Cardiac septum (tissue), 1 donor: ENCODE measurements at regions of chr12 and their contacts with region 1.

Region 1: GRCh38 chr12:110893956-110894355 is 26.4 kb downstream of the MYL2 start:
- DNase-seq: no peak

Region 2: GRCh38 chr12:110126557-110126956 is 767.4 kb before region 1 on chr12:
- intact Hi-C with region 1: no loop called
- DNase-seq: no peak

Region 3: DNA sequence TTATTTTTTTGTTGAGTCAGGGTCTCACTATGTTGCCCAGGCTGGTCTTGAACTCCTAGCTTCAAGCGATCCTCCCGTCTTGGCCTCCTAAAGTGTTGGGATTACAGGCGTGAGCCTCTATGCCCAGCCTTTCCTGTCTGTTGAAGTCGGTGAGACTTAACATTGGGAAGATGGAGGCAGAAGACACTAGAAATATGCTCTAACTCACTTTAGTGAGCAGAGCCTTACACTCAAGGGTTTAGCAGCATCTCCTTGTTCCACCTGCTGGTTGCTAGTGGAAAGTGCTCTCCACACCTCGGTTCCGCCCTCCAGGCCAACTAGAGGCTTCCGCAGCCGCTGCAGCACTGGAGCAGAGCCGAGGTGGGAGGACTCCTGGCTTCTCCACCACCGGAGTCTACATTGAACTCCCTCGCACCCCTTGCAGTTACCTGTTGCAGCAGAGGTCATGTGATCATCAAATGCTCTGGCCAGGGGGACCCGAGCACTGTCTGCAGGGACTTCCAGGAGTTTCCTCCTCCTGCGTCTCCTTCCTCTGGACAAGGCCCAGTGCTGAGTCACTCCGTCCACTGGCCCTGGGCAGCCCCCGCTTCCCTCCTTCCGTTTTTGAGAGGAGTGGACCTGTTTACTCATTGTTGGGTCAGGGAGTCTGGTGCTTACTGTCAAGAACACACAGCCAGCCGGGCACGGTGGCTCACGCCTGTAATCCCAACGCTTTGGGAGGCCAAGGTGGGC is 195.6 kb before region 1 on chr12:
- intact Hi-C with region 1: no loop called
- DNase-seq: peak; percentile 92

Region 4: DNA sequence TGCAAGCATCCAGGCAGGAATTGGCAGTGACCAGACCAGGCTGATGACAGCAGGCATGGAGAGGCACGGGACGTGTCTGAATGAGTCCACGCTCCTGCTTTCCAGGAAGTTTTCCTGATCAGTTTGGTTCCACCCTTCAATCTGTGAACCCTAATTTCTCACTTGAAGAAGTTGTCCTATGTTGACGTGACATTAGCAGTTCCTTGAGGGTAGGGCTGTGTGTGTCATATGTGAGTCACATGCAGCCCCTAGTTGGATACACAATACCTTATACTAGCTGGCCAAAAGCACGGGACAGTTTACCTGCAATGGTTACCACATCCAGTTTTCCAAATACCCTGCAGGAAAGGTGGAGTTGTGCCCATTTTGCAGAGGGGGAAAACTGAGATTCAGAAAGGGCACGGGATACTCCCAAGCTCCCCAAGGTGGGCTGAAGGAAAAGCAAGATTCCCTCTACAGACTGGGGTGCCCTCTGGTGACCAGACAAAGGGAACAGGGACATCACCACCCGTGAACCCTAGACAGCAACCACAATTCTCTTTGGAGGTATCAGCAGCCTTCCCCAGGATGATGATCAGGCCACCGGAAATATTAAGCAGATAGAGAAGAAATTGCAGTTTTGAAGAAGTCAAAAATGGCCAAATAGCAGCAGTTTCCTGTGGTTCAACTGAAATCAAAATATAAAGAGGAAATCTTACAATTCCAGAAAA is 280.4 kb after region 1 on chr12:
- intact Hi-C with region 1: loop called (anchors 5 kb)
- DNase-seq: no peak

Region 5: DNA sequence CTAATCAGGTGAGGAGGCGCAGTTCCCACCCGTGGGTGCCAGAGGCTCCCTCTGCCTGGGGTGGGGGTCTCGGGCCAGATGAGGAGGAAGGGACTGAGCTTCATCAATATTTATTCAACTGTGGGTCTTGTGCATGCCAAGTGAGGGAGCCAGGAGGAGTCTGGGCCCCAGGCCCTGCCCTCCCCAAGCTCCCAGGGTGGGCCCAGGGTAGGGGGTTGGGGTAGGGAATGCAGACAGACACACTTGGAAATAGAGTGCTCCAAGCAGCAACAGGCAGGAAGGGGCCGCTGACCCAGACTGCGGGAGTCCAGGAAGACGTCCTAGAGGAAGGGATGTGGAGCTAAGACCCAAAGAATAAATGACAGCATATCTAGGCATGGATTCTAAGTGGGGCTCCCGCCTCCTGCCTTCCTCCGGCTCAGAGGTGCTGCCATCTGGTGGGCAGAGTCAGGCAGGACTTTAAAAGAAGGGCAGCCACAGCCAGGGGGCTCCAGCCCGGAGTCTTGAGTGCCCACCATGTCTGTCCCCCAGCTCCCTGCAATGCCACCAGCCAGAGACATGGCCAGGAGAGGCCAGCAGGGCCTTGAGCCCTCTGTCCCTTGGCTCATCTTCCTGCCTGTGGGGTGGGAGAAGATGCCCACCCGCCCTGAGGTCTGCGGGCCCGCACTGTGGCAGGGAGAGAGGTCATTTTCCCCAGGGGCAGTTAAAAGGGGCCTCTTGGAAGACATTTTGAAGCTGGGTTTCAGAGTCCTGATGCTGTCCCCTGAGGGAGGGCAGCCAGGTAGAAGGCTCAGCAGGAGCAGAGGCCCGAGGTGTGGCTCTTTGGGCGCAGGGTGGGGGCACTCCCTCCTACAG is 404.9 kb after region 1 on chr12:
- intact Hi-C with region 1: loop called (anchors 1 kb)
- DNase-seq: no peak

Region 6: GRCh38 chr12:111313833-111314259 is 419.9 kb after region 1 on chr12:
- intact Hi-C with region 1: loop called (anchors 5 kb)
- DNase-seq: peak; percentile 85